ENCODE measurements at regions of chr19 and their contacts with region 1.

Region 1: DNA sequence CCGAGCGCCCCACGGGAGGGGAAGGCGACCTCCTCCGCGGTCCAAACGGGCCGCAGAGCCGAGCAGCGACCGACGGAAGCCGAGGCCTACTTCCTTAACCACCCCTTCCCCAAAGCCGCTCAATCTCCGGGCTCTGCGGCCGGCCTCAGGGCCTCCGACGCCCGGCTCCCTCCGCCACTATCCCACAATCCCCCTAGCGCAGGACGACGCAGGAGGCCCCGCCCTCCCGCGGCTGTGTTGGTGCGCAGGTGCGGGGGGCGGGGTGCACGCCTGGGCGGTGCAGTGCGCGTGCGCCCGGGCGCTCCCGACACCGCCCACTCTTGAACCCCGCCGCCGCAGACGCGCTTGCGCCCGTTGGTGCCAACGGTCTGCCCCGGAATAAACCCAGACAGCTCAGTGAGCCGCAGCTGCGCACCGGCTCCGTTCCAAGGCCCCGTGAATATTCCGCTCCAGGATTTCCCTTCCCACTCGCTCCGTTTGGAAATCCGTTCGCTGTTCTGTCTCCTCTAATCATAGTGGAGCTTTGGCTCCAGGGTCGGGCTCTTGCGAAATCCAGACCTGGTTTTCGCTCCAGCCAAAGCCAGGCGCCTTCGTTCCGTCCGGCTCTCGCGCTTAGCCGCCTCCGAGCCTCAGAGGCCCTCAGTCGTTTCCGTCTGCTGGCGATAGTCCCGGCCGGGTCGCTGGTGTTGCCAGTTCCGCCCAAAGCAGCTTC is at the start of gene PPP6R1:
- DNase-seq: peak; percentile 99 to 100
- ATAC-seq: peak; percentile 83 to 93
- H3K4me3 ChIP-seq: peak within 1 kb of the TSS; percentile 81
- H3K27ac ChIP-seq: peak within 1 kb of the TSS; percentile 87 to 95
- H3K4me1 ChIP-seq: peaks cover 36% of the 10 kb centered on the region
- CTCF ChIP-seq: no peak
- EP300 ChIP-seq: peak in 1 of 2 experiments; percentile 31; a peak in 1 of 5 replicates
- POLR2A ChIP-seq: peak; percentile 87
- RAD21 ChIP-seq: peak; percentile 44 to 61; a peak in 4 of 5 replicates
- polyA plus RNA-seq, gene PPP6R1: 42.9 and 44.6 TPM in 2 replicates

Region 2: DNA sequence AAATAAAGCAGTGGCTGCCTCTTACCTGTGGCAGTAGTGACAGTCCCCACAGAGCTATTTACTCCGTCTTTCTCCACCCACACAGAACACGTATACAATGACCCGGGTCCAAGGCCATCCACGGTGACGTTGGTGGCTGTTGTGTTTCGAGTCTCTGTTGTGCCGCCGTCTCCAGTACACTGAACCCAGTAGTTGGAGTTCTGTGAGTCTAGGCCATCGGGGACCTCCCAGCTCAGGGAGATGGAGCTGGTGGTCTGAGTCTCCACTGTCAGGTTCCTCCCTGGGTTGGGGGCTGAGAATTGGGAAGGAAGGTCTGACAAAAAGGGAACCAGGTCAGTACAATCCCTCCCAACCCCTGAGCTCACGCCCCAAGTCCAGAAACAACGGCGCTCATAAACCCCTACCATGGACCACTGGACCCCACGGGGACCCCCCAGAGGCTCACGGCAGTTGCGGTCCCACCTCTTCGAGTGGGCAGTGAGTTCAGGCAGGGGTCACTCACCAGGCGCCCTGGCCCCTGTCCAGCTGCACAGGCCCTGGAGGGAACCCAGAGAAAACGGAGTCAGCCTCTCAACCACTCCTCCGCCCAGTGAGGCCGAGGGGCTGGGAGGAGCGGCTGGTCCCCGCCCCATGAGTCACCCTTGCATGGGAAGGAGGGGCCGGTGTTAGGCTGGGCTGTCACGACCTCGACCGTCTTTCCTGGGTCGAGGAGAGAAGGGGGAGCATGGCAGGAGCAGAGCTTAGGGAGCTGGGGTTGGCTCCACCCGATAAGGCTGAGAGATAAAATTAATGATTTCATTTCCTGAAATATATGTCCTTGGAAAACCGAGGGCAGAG is 52.1 kb before region 1 on chr19:
- CTCF ChIA-PET with region 1: interaction called, 17 read pairs
- POLR2A ChIA-PET with region 1: interaction called, 7 read pairs
- DNase-seq: peak; percentile 93 to 100
- ATAC-seq: peak; percentile 82 to 88
- H3K4me3 ChIP-seq: peak overlapping the region; percentile 30
- H3K27ac ChIP-seq: peak overlapping the region; percentile 62 to 83
- H3K4me1 ChIP-seq: peaks cover 43% of the 10 kb centered on the region
- CTCF ChIP-seq: no peak
- EP300 ChIP-seq: no peak
- POLR2A ChIP-seq: no peak; the same call in 1 of the 2 replicates
- RAD21 ChIP-seq: no peak

Region 3: GRCh38 chr19:55216461-55217198 is 42.4 kb before region 1 on chr19:
- CTCF ChIA-PET with region 1: interaction called, 4 read pairs
- POLR2A ChIA-PET with region 1: interaction called, 52 read pairs
- DNase-seq: peak; percentile 99 to 100
- ATAC-seq: peak; percentile 93
- H3K4me3 ChIP-seq: peak overlapping the region; percentile 51
- H3K27ac ChIP-seq: peak overlapping the region; percentile 83 to 88
- H3K4me1 ChIP-seq: peaks cover 12% of the 10 kb centered on the region
- CTCF ChIP-seq: no peak
- EP300 ChIP-seq: peak in 1 of 2 experiments; percentile 41; a peak in 1 of 5 replicates
- POLR2A ChIP-seq: peak; percentile 42
- RAD21 ChIP-seq: peak; percentile 38 to 52; a peak in 3 of 5 replicates

Region 4: GRCh38 chr19:55279770-55280643 is 21.0 kb after region 1 on chr19 and contains the start of gene HSPBP1:
- CTCF ChIA-PET with region 1: interaction called, 44 read pairs
- POLR2A ChIA-PET with region 1: interaction called, 21 read pairs
- DNase-seq: peak; percentile 85 to 100
- ATAC-seq: peak; percentile 92 to 95
- H3K4me3 ChIP-seq: peak within 1 kb of the TSS; percentile 75
- H3K27ac ChIP-seq: peak within 1 kb of the TSS; percentile 80 to 92
- H3K4me1 ChIP-seq: peaks cover 33% of the 10 kb centered on the region
- CTCF ChIP-seq: no peak
- EP300 ChIP-seq: no peak
- POLR2A ChIP-seq: peak; percentile 67
- RAD21 ChIP-seq: no peak
- polyA plus RNA-seq, gene HSPBP1: 52.1 and 55.3 TPM in 2 replicates

Region 5: DNA sequence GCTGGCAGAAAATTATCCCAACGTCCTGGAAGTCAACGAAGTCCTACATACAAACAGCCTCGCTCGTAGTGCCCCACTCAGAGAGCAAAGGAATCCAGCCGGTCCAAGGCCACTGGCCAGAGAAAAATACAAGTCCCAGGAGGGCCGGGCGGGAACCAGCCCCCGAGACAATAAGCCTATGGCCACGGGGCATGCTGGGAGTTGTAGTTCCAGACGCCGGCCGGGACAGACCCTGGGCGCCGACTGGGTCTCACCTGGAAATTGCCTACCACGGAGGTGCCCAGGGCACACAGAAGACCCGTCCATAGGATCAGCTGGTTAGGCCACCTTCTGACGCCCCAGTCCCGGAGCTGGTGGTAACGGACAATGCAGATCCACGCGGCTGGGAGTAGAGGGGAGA is 60.8 kb after region 1 on chr19:
- CTCF ChIA-PET with region 1: no interaction called
- POLR2A ChIA-PET with region 1: no interaction called
- DNase-seq: no peak
- ATAC-seq: peak; percentile 54 to 82; a peak in 4 of 6 replicates
- H3K4me3 ChIP-seq: no peak overlapping the region
- H3K27ac ChIP-seq: 0 out of 6 replicates have a peak overlapping the region, but pooled peaks of 1 of the 2 experiments have one; percentile 14
- H3K4me1 ChIP-seq: peaks cover 19% of the 10 kb centered on the region
- CTCF ChIP-seq: no peak
- EP300 ChIP-seq: no peak
- POLR2A ChIP-seq: no peak
- RAD21 ChIP-seq: no peak

Region 6: GRCh38 chr19:55723491-55723890 is 464.5 kb after region 1 on chr19:
- CTCF ChIA-PET with region 1: no interaction called
- POLR2A ChIA-PET with region 1: no interaction called
- DNase-seq: no peak
- ATAC-seq: no peak
- H3K4me3 ChIP-seq: no peak overlapping the region
- H3K27ac ChIP-seq: no peak overlapping the region
- H3K4me1 ChIP-seq: no peaks in the 10 kb centered on the region
- CTCF ChIP-seq: no peak
- EP300 ChIP-seq: no peak
- POLR2A ChIP-seq: no peak
- RAD21 ChIP-seq: no peak